ENCODE measurements at regions of chr9 and their contacts with region 1.

Region 1: DNA sequence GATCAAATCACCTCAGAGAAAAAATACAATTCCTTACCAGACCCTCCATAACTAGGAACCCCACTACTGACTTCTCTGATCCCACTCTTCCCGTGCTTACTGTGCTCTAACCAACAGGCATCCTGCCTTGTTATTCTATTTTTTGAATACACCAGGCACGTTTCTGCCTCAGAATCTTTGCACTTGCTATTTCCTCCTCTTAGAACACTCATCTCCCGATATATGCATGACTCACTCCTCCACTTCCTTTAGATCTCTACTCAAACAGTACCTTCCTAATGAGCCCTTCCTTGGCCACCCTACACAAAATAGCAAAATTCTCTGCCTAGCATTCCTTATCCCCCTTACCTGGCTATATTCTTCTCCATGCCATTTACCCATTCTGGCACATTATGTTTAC is 43.9 kb downstream of the MAPKAP1 start:
- DNase-seq: no peak
- H3K4me3 Mint-ChIP-seq: no peak overlapping the region
- H3K27ac Mint-ChIP-seq: peak overlapping the region; percentile 46
- H3K4me1 Mint-ChIP-seq: peaks cover 10% of the 10 kb centered on the region
- H3K27me3 Mint-ChIP-seq: no peaks in the 10 kb centered on the region

Region 2: DNA sequence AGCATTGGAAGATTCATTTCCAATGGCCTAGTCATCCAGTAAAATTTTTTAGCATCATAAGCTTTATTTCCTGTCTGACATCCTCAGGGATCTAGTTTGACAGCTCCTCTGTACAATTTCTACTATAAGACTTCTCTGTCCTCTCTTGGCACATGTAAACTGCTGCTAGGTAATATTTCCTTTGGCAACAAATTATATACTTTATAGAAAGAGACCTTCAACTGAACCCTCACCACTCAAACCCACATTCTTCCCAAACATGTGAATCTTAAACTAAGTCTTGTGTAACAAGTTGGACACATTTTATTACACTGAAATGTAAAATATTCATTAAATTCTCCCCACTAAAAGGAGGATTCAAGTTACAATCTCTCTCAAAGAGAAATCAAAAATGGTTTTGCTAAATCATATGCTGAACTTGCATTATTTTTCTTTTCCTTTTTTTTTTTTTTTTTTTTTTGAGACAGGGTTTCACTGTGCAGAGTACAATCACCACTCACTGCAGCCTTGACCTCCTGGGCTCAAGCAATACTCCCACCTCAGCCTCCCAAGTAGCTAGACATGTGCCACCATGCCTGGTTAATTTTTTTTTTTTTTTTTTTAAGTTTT is 556.7 kb before region 1 on chr9:
- intact Hi-C with region 1: no loop called
- DNase-seq: no peak
- H3K4me3 Mint-ChIP-seq: no peak overlapping the region
- H3K27ac Mint-ChIP-seq: no peak overlapping the region
- H3K4me1 Mint-ChIP-seq: no peaks in the 10 kb centered on the region
- H3K27me3 Mint-ChIP-seq: no peaks in the 10 kb centered on the region

Region 3: DNA sequence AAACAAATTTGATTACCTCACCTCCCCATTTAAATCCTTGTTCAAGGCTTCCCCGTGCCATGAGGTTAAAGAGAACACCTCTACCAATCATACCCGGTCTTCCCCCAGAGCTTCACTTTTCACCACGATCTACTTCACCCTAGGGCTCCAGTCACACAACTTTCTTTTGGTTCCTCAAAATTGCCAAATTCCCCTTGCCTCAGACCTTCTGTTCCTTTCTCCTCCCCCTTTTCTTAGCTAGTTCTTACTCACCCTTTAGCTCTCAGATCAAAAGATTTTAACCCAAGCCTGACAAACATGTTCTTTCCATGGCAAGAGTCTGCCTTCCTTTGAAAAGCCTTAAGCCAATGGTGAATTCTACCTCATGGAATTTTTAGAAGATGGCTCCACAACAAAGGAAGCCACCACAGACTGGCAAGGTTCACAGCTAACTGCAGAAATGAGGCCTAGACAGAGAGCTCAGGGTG is 12.8 kb before region 1 on chr9:
- intact Hi-C with region 1: loop called (anchors 1 kb)
- DNase-seq: no peak
- H3K4me3 Mint-ChIP-seq: peak overlapping the region; percentile 54
- H3K27ac Mint-ChIP-seq: peak overlapping the region; percentile 85
- H3K4me1 Mint-ChIP-seq: peaks cover 71% of the 10 kb centered on the region
- H3K27me3 Mint-ChIP-seq: no peaks in the 10 kb centered on the region

Region 4: GRCh38 chr9:125700791-125701190 is 37.7 kb after region 1 on chr9:
- intact Hi-C with region 1: loop called (anchors 2 kb)
- DNase-seq: no peak
- H3K4me3 Mint-ChIP-seq: no peak overlapping the region
- H3K27ac Mint-ChIP-seq: peak overlapping the region; percentile 53
- H3K4me1 Mint-ChIP-seq: peaks cover 56% of the 10 kb centered on the region
- H3K27me3 Mint-ChIP-seq: no peaks in the 10 kb centered on the region